HAP-1 (cell line): ENCODE measurements at regions of chr17 and their contacts with region 1.

Region 1: GRCh38 chr17:29931231-29931932 is 1.4 kb upstream of the SSH2 start:
- DNase-seq: peak; percentile 89 to 98
- H3K4me3 ChIP-seq: peak overlapping the region; percentile 76
- H3K4me1 ChIP-seq: peaks cover 27% of the 10 kb centered on the region
- H3K27me3 ChIP-seq: no peaks in the 10 kb centered on the region

Region 2: GRCh38 chr17:29617125-29617480 is 314.3 kb before region 1 on chr17:
- in situ Hi-C with region 1: loop called (anchors 25 kb)
- DNase-seq: peak; percentile 43 to 88
- H3K4me3 ChIP-seq: no peak overlapping the region
- H3K4me1 ChIP-seq: peaks cover 15% of the 10 kb centered on the region
- H3K27me3 ChIP-seq: no peaks in the 10 kb centered on the region

Region 3: GRCh38 chr17:29821897-29822296 is 109.5 kb before region 1 on chr17:
- in situ Hi-C with region 1: loop called (anchors 5 kb)
- DNase-seq: no peak
- H3K4me3 ChIP-seq: no peak overlapping the region
- H3K4me1 ChIP-seq: peaks cover 6% of the 10 kb centered on the region
- H3K27me3 ChIP-seq: no peaks in the 10 kb centered on the region